ENCODE measurements at regions of chr7 and their contacts with region 1.

Region 1: GRCh38 chr7:116236020-116236630 is 25.8 kb downstream of the TES start:
- DNase-seq: peak; percentile 58 to 81
- H3K4me3 ChIP-seq: no peak overlapping the region
- H3K27ac ChIP-seq: no peak overlapping the region
- H3K4me1 ChIP-seq: peaks cover 17 to 91% (median 44%) of the 10 kb centered on the region in 4 donors
- H3K27me3 ChIP-seq: no peaks in the 10 kb centered on the region
- CTCF ChIP-seq: peak in 4 of 7 experiments; percentile 35 to 65 (median 48)
- EP300 ChIP-seq: no peak
- POLR2A ChIP-seq: no peak

Region 2: GRCh38 chr7:115838829-115839228 is 397.3 kb before region 1 on chr7:
- intact Hi-C with region 1: no loop called
- DNase-seq: no peak
- H3K4me3 ChIP-seq: no peak overlapping the region
- H3K27ac ChIP-seq: no peak overlapping the region
- H3K4me1 ChIP-seq: no peaks in the 10 kb centered on the region
- H3K27me3 ChIP-seq: no peaks in the 10 kb centered on the region
- CTCF ChIP-seq: no peak
- EP300 ChIP-seq: no peak
- POLR2A ChIP-seq: no peak

Region 3: GRCh38 chr7:116180302-116180701 is 55.8 kb before region 1 on chr7:
- intact Hi-C with region 1: loop called (anchors 5 kb)
- DNase-seq: peak in 1 of 2 donors; percentile 74
- H3K4me3 ChIP-seq: no peak overlapping the region
- H3K27ac ChIP-seq: no peak overlapping the region
- H3K4me1 ChIP-seq: peaks cover 0 to 9% (median 2%) of the 10 kb centered on the region in 4 donors
- H3K27me3 ChIP-seq: no peaks in the 10 kb centered on the region
- CTCF ChIP-seq: peak in 5 of 7 experiments; percentile 70 to 88 (median 74)
- EP300 ChIP-seq: no peak
- POLR2A ChIP-seq: no peak

Measured in stomach (tissue), 19 donors.